ENCODE measurements at regions of chr3 and their contacts with region 1.

Region 1: GRCh38 chr3:104687362-104687761 is 679.3 kb upstream of the ALCAM start:
- DNase-seq: peak in 1 of 2 donors; percentile 46
- H3K4me3 ChIP-seq: no peak overlapping the region
- H3K27ac ChIP-seq: no peak overlapping the region
- H3K4me1 ChIP-seq: no peaks in the 10 kb centered on the region
- H3K27me3 ChIP-seq: no peaks in the 10 kb centered on the region
- CTCF ChIP-seq: no peak

Region 2: DNA sequence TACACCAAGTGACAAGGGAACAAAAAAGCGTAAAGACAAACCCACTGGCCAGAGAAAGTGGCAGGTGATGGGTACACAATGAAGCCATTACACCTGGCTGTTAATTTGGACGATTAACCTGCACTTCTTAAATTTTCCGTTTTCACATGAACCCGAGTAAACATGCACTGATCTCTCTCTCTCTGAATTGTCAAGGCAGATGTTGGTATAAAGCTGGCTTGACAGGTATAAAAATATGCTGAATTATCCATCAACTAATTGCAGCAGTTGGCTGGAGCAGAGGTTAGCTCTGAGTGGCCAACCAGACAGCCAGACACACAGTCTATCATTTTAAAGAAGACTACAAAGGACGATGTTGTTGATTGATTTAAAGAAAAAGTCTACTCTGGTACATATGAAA is 117.7 kb after region 1 on chr3:
- intact Hi-C with region 1: loop called (anchors 10 kb)
- DNase-seq: no peak
- H3K4me3 ChIP-seq: no peak overlapping the region
- H3K27ac ChIP-seq: no peak overlapping the region
- H3K4me1 ChIP-seq: no peaks in the 10 kb centered on the region
- H3K27me3 ChIP-seq: no peaks in the 10 kb centered on the region
- CTCF ChIP-seq: no peak

Measured in tibial artery (tissue), 4 donors.